Astrocyte of the cerebellum (primary cell): ENCODE measurements at regions of chr1 and their contacts with region 1.

Region 1: GRCh38 chr1:111222308-111223125 is 5.0 kb upstream of the CHI3L2 start:
- DNase-seq: peak; percentile 24
- H3K4me3 ChIP-seq: no peak overlapping the region
- CTCF ChIP-seq: peak; percentile 97

Region 2: GRCh38 chr1:111755331-111756123 is 533.0 kb after region 1 on chr1 and contains the start of gene DDX20:
- in situ Hi-C with region 1: loop called (anchors 25 kb)
- DNase-seq: peak; percentile 95
- H3K4me3 ChIP-seq: peak within 1 kb of the TSS; percentile 93
- CTCF ChIP-seq: peak; percentile 86